ENCODE measurements at regions of chr19 and their contacts with region 1.

Region 1: DNA sequence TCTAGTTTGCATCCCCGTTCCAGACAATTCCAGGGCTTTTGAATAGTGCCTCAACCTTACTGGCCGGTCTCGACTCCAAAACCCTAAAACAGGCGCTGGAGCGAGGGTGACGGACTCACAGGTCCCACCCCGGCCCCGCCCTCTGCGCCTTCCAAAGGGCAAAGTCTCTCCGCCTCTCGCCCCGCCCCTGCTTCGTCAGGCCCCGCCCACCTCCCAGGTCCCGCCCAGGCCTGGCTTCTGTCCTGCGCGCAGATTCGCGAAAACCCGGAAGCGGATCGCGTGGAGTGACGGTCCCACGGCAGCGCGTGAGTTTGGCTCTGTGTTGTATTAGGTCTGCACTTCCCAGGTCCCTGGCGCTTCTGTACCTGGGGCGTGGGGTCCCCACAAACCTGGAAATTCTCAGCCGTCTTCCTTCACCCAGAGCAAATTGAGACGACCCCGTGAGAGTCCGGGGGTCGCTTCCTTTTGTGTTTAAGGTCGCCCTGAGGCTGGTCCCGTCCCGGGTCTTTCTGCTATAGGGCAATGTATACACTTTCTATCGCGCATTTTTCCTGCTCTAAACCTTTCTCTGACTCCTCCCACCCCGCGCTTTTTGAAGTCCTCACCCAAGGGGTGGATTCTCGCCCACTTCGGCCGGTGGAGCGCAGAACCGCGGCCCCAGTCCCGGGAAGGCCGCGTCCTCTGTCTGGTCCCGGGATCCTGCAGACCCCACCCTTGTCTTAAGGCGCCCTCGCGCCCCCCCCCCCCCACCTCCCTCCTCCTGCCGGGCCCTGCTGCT is at the start of gene ZNF813:
- DNase-seq: peak; percentile 88 to 96 (median 91)
- H3K4me3 ChIP-seq: peak within 1 kb of the TSS; percentile 57 to 62
- H3K4me3 Mint-ChIP-seq: peak within 1 kb of the TSS; percentile 89 to 96 (median 93)
- H3K27ac ChIP-seq: peak within 1 kb of the TSS; percentile 51
- H3K27ac Mint-ChIP-seq: peak within 1 kb of the TSS; percentile 83 to 94 (median 91)
- H3K4me1 ChIP-seq: peaks cover 13% of the 10 kb centered on the region
- H3K4me1 Mint-ChIP-seq: peaks cover 14 to 45% (median 25%) of the 10 kb centered on the region in 4 donors
- H3K27me3 ChIP-seq: no peaks in the 10 kb centered on the region
- H3K27me3 Mint-ChIP-seq: peaks cover 8 to 9% of the 10 kb centered on the region in 2 donors
- total RNA-seq, gene ZNF813: 9.4 to 10.1 TPM

Region 2: DNA sequence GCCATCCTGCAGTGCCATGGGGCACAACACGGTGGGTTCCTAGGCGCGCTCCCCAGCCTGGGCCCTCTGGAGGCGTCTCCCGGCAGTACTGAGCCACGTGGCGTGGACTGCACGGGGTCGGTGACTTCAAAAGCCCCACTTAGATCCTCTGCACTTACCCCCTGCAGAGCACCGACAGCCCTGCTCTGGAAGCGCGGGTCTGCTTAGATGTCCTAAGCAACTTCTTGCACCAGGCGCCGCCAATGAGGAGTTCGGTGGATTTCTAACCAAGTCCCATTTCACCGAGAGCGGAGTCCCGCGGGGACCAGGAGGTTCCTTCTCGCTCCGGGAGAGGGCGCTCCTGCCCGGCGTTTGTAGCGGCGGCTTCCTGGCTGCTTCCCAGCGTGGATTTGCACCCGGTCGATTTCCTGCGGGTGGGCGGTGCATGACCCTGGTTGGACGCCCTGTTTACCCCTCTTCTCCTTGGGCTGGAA is 159.3 kb before region 1 on chr19:
- CTCF ChIA-PET with region 1: no interaction called
- POLR2A ChIA-PET with region 1: no interaction called
- intact Hi-C with region 1: no loop called
- DNase-seq: no peak
- H3K4me3 ChIP-seq: no peak overlapping the region
- H3K4me3 Mint-ChIP-seq: no peak overlapping the region
- H3K27ac ChIP-seq: no peak overlapping the region
- H3K27ac Mint-ChIP-seq: no peak overlapping the region
- H3K4me1 ChIP-seq: no peaks in the 10 kb centered on the region
- H3K4me1 Mint-ChIP-seq: peaks cover 0 to 3% (median under 1%) of the 10 kb centered on the region in 4 donors
- H3K27me3 ChIP-seq: no peaks in the 10 kb centered on the region
- H3K27me3 Mint-ChIP-seq: peaks cover 12 to 20% of the 10 kb centered on the region in 2 donors

Region 3: DNA sequence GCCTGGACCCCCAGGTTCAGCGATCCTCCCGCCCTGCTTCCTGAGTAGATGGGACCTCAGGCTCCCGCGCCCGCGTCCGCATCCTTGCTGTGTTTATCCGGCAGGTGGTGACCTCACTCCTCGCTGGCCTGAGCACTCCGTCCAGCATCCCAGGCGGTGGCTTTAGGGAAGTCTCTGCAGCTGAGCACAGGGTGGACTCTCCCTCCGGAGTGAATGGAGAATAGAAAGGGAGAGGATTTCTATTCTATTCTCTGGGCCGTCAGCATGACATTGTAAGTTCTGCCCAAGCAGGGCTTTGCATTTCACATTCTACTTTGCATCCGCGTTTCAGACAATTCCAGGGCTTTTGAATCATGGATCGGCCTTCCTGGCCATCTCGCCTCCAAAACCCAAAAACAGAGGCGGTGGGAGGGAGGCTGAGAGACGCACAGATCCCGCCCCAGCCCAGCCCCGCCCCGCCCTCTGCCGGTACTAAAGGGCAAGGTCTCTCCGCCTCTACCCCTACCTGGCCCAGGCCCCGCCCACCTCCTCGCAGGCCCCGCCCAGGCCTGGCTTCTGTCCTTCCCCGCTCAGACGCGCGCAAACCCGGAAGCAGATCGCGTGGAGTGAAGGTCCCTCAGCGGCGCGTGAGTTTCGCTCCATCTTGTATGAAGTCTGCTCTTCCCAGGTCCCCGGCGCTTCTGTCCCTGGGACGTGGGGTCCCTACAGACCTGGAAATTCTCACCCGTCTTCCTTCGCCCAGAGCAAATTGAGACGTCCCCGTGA is 102.4 kb before region 1 on chr19 and contains the start of gene ZNF525:
- CTCF ChIA-PET with region 1: no interaction called
- POLR2A ChIA-PET with region 1: no interaction called
- intact Hi-C with region 1: loop called (anchors 1 kb)
- DNase-seq: peak; percentile 93 to 97 (median 96)
- H3K4me3 ChIP-seq: peak within 1 kb of the TSS; percentile 57 to 87
- H3K4me3 Mint-ChIP-seq: peak within 1 kb of the TSS; percentile 95 to 99 (median 96)
- H3K27ac ChIP-seq: peak within 1 kb of the TSS; percentile 70
- H3K27ac Mint-ChIP-seq: peak within 1 kb of the TSS; percentile 90 to 98 (median 97)
- H3K4me1 ChIP-seq: peaks cover 6% of the 10 kb centered on the region
- H3K4me1 Mint-ChIP-seq: peaks cover 15 to 38% (median 21%) of the 10 kb centered on the region in 4 donors
- H3K27me3 ChIP-seq: no peaks in the 10 kb centered on the region
- H3K27me3 Mint-ChIP-seq: no peaks in the 10 kb centered on the region
- total RNA-seq, gene ZNF525: 36.5 to 36.6 TPM

Region 4: DNA sequence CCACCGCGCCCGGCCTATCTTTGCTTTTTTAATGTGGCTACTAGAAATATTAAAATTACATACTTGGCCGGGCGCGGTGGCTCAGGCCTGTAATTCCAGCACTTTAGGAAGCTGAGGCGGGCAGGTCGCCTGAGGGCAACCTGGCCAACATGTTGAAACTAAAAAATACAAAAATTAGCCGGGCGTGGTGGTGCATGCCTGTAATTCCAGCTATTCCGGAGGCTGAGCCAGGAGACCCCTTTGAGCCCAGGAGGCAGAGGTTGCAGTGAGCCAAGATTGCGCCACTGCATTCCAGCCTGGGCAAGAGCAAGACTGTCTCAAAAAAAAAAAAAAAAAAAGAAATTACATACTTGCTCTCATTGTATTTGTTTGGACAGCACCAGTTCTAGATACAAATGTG is 129.3 kb after region 1 on chr19:
- CTCF ChIA-PET with region 1: no interaction called
- POLR2A ChIA-PET with region 1: no interaction called
- intact Hi-C with region 1: no loop called
- DNase-seq: no peak
- H3K4me3 ChIP-seq: no peak overlapping the region
- H3K4me3 Mint-ChIP-seq: no peak overlapping the region
- H3K27ac ChIP-seq: no peak overlapping the region
- H3K27ac Mint-ChIP-seq: no peak overlapping the region
- H3K4me1 ChIP-seq: no peaks in the 10 kb centered on the region
- H3K4me1 Mint-ChIP-seq: no peaks in the 10 kb centered on the region
- H3K27me3 ChIP-seq: no peaks in the 10 kb centered on the region
- H3K27me3 Mint-ChIP-seq: no peaks in the 10 kb centered on the region

Measured in CD4-positive, alpha-beta memory T cell (primary cell).